ENCODE measurements at regions of chr2 and their contacts with region 1.

Region 1: GRCh38 chr2:101361121-101361870 is 26.0 kb downstream of the CREG2 start:
- DNase-seq: peak in 4 of 9 experiments; percentile 20 to 60 (median 36)
- ATAC-seq: peak; percentile 54
- H3K4me3 ChIP-seq: no peak overlapping the region
- H3K4me3 Mint-ChIP-seq: peak overlapping the region; percentile 16
- H3K27ac ChIP-seq: peak overlapping the region in 1 of 2 experiments; percentile 56
- H3K27ac Mint-ChIP-seq: no peak overlapping the region
- H3K4me1 ChIP-seq: peaks cover 17% of the 10 kb centered on the region
- H3K4me1 Mint-ChIP-seq: peaks cover 24% of the 10 kb centered on the region
- H3K27me3 ChIP-seq: no peaks in the 10 kb centered on the region
- H3K27me3 Mint-ChIP-seq: no peaks in the 10 kb centered on the region
- CTCF ChIP-seq: no peak

Region 2: DNA sequence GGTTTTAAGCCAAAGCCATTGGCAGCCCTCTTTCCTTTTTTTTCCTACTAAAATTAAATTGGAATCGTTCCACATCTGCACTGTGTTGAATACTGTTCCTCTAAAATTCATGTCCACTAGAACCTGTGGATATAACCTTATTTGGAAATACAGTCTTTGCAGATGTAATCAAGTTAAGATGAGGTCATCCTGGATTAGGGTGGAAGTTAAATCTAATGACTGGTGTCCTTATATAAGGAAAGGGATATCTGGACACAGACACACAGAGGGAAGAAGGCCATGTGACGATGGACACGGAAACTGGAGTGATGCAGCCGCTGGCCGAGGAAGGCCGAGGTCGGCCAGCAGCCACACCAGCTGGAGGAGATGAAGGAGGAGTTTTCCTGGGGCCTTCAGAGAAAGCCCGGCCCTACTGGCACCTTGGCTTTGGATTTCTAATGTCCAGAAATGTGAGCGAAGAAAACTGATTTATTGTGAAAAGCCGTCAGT is 1088.4 kb before region 1 on chr2:
- CTCF ChIA-PET with region 1: no interaction called
- POLR2A ChIA-PET with region 1: no interaction called
- intact Hi-C with region 1: no loop called
- DNase-seq: no peak
- ATAC-seq: no peak
- H3K4me3 ChIP-seq: no peak overlapping the region
- H3K4me3 Mint-ChIP-seq: no peak overlapping the region
- H3K27ac ChIP-seq: no peak overlapping the region
- H3K27ac Mint-ChIP-seq: no peak overlapping the region
- H3K4me1 ChIP-seq: no peaks in the 10 kb centered on the region
- H3K4me1 Mint-ChIP-seq: no peaks in the 10 kb centered on the region
- H3K27me3 ChIP-seq: no peaks in the 10 kb centered on the region
- H3K27me3 Mint-ChIP-seq: no peaks in the 10 kb centered on the region
- CTCF ChIP-seq: no peak

Region 3: DNA sequence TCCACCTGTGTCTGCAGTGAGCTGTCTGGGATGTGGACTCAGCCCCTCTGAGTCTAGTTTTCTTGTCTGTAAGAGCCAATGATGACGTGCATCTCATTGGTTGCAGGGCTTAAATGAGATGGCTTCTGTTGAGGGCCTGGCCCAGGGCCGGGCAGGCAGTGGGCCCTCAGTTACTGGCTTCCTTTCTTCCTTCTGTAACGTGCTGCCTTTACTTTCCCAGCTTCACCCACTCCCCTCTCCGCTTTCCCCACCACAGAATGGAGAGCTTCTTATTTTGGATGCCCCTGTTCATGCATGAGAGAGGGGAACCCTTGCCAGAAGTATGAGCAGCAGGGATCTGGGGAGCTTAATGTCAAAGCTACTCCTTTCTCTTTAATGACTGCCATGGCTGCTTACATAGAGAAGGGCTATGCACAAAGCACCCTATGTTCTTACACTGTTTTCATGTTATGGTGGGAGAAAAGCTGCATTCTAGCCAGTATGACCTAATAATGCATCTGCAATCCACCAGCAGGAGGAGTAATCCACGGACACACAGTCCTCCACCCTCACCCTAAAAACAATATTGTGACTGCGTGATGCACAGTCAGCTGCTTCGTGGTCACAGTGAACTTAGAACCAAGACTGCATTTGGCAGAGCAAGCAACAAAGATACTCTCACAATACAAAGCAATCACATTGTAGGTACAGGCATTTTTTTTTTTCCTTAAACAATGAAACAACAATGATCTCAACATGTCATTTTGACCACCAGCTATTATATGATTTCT is 11.2 kb before region 1 on chr2:
- CTCF ChIA-PET with region 1: interaction called, 16 read pairs
- POLR2A ChIA-PET with region 1: interaction called, 9 read pairs
- intact Hi-C with region 1: no loop called
- DNase-seq: peak in 2 of 9 experiments; percentile 25 to 47
- ATAC-seq: no peak
- H3K4me3 ChIP-seq: no peak overlapping the region
- H3K4me3 Mint-ChIP-seq: no peak overlapping the region
- H3K27ac ChIP-seq: no peak overlapping the region
- H3K27ac Mint-ChIP-seq: no peak overlapping the region
- H3K4me1 ChIP-seq: no peaks in the 10 kb centered on the region
- H3K4me1 Mint-ChIP-seq: peaks cover 4% of the 10 kb centered on the region
- H3K27me3 ChIP-seq: no peaks in the 10 kb centered on the region
- H3K27me3 Mint-ChIP-seq: no peaks in the 10 kb centered on the region
- CTCF ChIP-seq: no peak

Region 4: GRCh38 chr2:101410716-101411211 is 49.5 kb after region 1 on chr2:
- CTCF ChIA-PET with region 1: no interaction called
- POLR2A ChIA-PET with region 1: no interaction called
- intact Hi-C with region 1: no loop called
- DNase-seq: no peak
- ATAC-seq: no peak
- H3K4me3 ChIP-seq: no peak overlapping the region
- H3K4me3 Mint-ChIP-seq: no peak overlapping the region
- H3K27ac ChIP-seq: no peak overlapping the region
- H3K27ac Mint-ChIP-seq: no peak overlapping the region
- H3K4me1 ChIP-seq: no peaks in the 10 kb centered on the region
- H3K4me1 Mint-ChIP-seq: no peaks in the 10 kb centered on the region
- H3K27me3 ChIP-seq: no peaks in the 10 kb centered on the region
- H3K27me3 Mint-ChIP-seq: no peaks in the 10 kb centered on the region
- CTCF ChIP-seq: no peak